Calu3 (cell line): ENCODE measurements at regions of chr9 and their contacts with region 1.

Region 1: DNA sequence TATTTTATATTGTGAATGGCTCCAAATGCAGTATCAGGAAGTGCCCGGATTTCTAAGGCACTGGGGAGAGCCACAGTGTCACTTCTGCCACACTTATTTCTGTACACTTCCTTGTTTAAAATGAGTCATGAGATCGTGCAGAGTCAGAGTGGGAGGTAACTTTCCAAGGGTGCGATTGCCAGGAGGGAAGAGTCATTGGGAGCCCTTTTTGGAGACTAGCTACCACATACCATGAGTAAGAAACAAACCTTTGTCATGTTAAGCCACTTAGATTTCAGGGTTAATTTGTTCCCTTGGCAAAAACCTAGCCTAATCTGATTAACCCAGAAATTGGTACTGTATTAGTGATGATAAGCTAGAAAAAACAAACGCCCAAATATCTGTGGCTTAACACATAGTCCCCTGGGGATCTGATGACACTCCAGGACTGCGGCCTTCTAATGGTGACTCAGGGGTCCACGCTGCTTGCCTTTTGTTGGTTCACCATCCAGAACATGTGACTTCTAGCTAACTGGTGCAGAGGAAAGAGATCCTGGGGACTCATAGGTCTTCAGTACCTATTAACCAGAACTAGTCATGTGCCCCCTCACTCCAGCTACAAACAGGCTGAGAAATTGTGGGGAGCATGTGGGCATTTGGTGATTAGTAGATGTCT is 48.6 kb upstream of the TLE1 start:
- DNase-seq: peak; percentile 68
- H3K4me3 Mint-ChIP-seq: peak overlapping the region; percentile 13
- H3K27ac Mint-ChIP-seq: peak overlapping the region; percentile 97
- H3K4me1 Mint-ChIP-seq: peaks cover 23% of the 10 kb centered on the region
- H3K27me3 Mint-ChIP-seq: no peaks in the 10 kb centered on the region
- CTCF ChIP-seq: no peak

Region 2: GRCh38 chr9:81513059-81513458 is 224.9 kb before region 1 on chr9:
- CTCF ChIA-PET with region 1: no interaction called
- intact Hi-C with region 1: no loop called
- DNase-seq: no peak
- H3K4me3 Mint-ChIP-seq: no peak overlapping the region
- H3K27ac Mint-ChIP-seq: no peak overlapping the region
- H3K4me1 Mint-ChIP-seq: no peaks in the 10 kb centered on the region
- H3K27me3 Mint-ChIP-seq: no peaks in the 10 kb centered on the region
- CTCF ChIP-seq: no peak

Region 3: GRCh38 chr9:81826517-81826906 is 88.5 kb after region 1 on chr9:
- CTCF ChIA-PET with region 1: no interaction called
- intact Hi-C with region 1: loop called (anchors 10 kb)
- DNase-seq: no peak
- H3K4me3 Mint-ChIP-seq: no peak overlapping the region
- H3K27ac Mint-ChIP-seq: no peak overlapping the region
- H3K4me1 Mint-ChIP-seq: peaks cover 27% of the 10 kb centered on the region
- H3K27me3 Mint-ChIP-seq: no peaks in the 10 kb centered on the region
- CTCF ChIP-seq: no peak

Region 4: GRCh38 chr9:82036086-82036485 is 298.1 kb after region 1 on chr9:
- CTCF ChIA-PET with region 1: no interaction called
- intact Hi-C with region 1: no loop called
- DNase-seq: no peak
- H3K4me3 Mint-ChIP-seq: no peak overlapping the region
- H3K27ac Mint-ChIP-seq: no peak overlapping the region
- H3K4me1 Mint-ChIP-seq: peaks cover 8% of the 10 kb centered on the region
- H3K27me3 Mint-ChIP-seq: no peaks in the 10 kb centered on the region
- CTCF ChIP-seq: no peak